Colonic mucosa (tissue), 4 donors: ENCODE measurements at regions of chrX and their contacts with region 1.

Region 1: DNA sequence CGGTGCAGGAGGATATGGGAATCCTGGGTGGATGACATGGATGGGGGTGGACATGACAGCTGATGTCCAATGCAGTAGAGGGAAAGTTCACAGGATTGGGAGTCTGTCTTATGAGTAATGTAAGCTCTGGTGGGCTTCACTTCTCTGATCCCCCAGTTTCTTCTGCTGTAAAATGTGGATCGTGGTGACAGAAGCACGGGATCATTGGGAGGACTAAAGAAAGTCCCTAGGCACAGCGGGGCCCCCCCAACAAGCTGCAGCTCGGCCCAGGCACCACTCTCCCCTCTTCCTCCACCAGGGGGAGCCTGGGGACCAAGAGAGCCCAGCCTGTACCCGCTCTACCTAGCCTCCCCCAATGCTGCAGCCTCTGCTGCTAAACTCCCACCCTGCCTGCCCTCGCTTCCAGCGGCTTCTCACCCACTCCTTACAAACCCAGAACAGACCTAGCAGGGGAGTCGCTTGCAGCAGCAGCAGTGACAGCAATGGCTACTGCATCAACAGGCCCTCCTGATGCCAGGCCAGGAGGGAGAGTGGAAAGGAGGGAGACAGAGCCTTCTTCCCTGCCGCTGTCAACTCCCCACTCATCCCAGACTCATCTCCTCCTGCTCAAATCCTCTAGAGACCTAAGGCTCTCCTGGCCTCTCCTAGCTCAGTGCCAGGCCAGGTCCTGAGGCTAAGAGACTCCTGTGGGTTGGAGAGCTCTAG is 36.1 kb upstream of the IQSEC2 start:
- DNase-seq: peak; percentile 75
- H3K4me3 ChIP-seq: no peak overlapping the region
- H3K27ac ChIP-seq: no peak overlapping the region
- H3K4me1 ChIP-seq: no peaks in the 10 kb centered on the region
- H3K27me3 ChIP-seq: peaks cover 43% of the 10 kb centered on the region
- CTCF ChIP-seq: peak; percentile 86

Region 2: DNA sequence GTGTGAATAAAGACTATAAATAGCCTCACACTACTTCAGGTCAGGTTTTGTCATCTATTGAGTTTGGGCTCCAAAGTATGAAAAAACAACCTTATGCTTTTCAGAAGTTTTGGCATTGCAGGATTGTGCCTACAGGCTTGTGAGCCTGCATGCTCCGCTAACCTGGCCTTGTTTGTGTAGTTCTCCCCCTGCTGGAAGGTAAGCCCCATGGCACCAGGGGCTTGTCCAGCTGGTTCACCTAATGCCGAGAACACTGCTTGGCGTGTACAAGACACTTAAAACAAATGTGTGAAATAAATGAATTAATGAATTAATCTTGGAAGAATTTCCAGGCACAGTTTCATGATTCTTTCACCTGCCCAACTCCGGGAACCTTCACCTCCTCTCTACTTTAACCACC is 118.5 kb after region 1 on chrX:
- intact Hi-C with region 1: loop called (anchors 5 kb)
- DNase-seq: peak; percentile 72
- H3K4me3 ChIP-seq: no peak overlapping the region
- H3K27ac ChIP-seq: no peak overlapping the region
- H3K4me1 ChIP-seq: no peaks in the 10 kb centered on the region
- H3K27me3 ChIP-seq: no peaks in the 10 kb centered on the region
- CTCF ChIP-seq: peak; percentile 93

Region 3: DNA sequence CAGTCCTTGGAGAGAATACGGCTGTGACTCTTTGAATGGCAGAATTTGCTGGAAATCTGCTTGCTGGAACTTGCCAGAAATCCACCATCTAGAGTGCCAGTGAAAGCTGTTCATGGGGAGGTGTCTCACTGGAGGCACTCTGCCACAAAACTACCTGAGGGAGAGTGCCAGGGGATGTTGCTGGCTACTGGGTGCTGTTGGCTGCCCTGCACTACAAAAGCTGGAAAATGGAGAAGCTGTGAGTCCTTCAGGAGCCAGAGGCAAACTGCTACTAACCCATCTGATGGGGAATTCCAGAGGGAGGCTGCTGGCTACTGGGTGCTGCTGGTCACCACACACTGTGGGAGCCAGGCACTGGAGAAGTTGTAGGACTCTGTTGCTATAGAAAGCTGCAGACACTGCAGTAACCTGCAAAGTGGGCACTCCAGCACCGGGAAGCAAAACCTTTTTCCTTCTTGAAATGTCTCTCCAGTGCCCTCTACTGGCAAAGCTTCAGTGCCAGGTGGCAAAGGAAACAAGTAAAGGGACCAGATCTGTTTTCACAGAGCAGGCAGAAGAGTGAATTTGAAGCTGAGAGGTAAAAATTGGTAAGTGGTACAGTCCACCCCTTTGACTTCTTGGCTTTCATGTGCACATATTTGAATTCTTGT is 164.4 kb after region 1 on chrX:
- intact Hi-C with region 1: loop called (anchors 5 kb)
- DNase-seq: peak; percentile 73
- H3K4me3 ChIP-seq: no peak overlapping the region
- H3K27ac ChIP-seq: no peak overlapping the region
- H3K4me1 ChIP-seq: no peaks in the 10 kb centered on the region
- H3K27me3 ChIP-seq: no peaks in the 10 kb centered on the region
- CTCF ChIP-seq: peak; percentile 66